Naive thymus-derived CD4-positive, alpha-beta T cell (primary cell): ENCODE measurements at regions of chr4 and their contacts with region 1.

Region 1: GRCh38 chr4:18366892-18367291 is 345.3 kb upstream of the LCORL start:
- DNase-seq: peak in 4 of 9 donors; percentile 0 to 14 (median 10)
- ATAC-seq: peak; percentile 67
- H3K4me3 ChIP-seq: no peak overlapping the region
- H3K4me3 Mint-ChIP-seq: no peak overlapping the region
- H3K27ac ChIP-seq: no peak overlapping the region
- H3K27ac Mint-ChIP-seq: no peak overlapping the region
- H3K4me1 ChIP-seq: no peaks in the 10 kb centered on the region
- H3K4me1 Mint-ChIP-seq: no peaks in the 10 kb centered on the region
- H3K27me3 ChIP-seq: no peaks in the 10 kb centered on the region
- H3K27me3 Mint-ChIP-seq: peaks cover 0 to 32% (median 13%) of the 10 kb centered on the region in 5 donors

Region 2: GRCh38 chr4:17817020-17817419 is 549.9 kb before region 1 on chr4:
- CTCF ChIA-PET with region 1: interaction called, 5 read pairs
- POLR2A ChIA-PET with region 1: no interaction called
- intact Hi-C with region 1: loop called in 1 of 2 experiments (anchors 1 kb)
- DNase-seq: peak in 6 of 9 donors; percentile 13 to 53 (median 41)
- ATAC-seq: peak; percentile 90
- H3K4me3 ChIP-seq: no peak overlapping the region
- H3K4me3 Mint-ChIP-seq: peak overlapping the region in 1 of 10 donors; percentile 84
- H3K27ac ChIP-seq: no peak overlapping the region
- H3K27ac Mint-ChIP-seq: peak overlapping the region in 1 of 9 donors; percentile 85
- H3K4me1 ChIP-seq: no peaks in the 10 kb centered on the region
- H3K4me1 Mint-ChIP-seq: peaks cover 0 to 62% (median 6%) of the 10 kb centered on the region in 7 donors
- H3K27me3 ChIP-seq: no peaks in the 10 kb centered on the region
- H3K27me3 Mint-ChIP-seq: no peaks in the 10 kb centered on the region

Region 3: GRCh38 chr4:17934286-17934685 is 432.6 kb before region 1 on chr4:
- CTCF ChIA-PET with region 1: no interaction called
- POLR2A ChIA-PET with region 1: no interaction called
- intact Hi-C with region 1: loop called in 1 of 2 experiments (anchors 1 kb)
- DNase-seq: no peak
- ATAC-seq: no peak
- H3K4me3 ChIP-seq: no peak overlapping the region
- H3K4me3 Mint-ChIP-seq: no peak overlapping the region
- H3K27ac ChIP-seq: no peak overlapping the region
- H3K27ac Mint-ChIP-seq: no peak overlapping the region
- H3K4me1 ChIP-seq: no peaks in the 10 kb centered on the region
- H3K4me1 Mint-ChIP-seq: no peaks in the 10 kb centered on the region
- H3K27me3 ChIP-seq: no peaks in the 10 kb centered on the region
- H3K27me3 Mint-ChIP-seq: no peaks in the 10 kb centered on the region